GM10248 (cell line): ENCODE measurements at regions of chr2 and their contacts with region 1.

Region 1: DNA sequence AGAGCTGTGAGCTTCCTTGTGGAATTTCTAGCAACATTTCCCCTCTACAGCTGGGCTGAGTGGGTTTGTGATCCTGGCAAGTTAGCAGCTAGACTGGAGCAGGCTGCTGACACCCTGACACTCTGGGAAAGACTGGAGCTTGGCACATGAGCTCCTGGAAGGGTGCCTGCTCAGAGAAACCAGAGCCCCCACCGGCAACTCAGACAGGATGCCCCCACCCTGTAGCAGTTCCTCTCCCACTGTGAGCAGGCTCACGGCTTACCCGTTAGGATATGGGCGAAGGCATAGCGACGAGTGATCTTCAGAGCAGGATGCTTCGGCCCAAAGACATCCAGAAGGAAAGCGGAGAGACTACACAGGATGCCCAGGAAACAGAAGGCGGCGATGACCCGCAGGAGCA is 11.2 kb downstream of the TMEM127 start:
- DNase-seq: no peak
- CTCF ChIP-seq: no peak

Region 2: GRCh38 chr2:96265840-96266679 is 11.5 kb after region 1 on chr2 and contains the starts of genes CIAO1 and TMEM127:
- CTCF ChIA-PET with region 1: interaction called, 18 read pairs
- POLR2A ChIA-PET with region 1: interaction called, 7 read pairs
- DNase-seq: peak; percentile 99
- CTCF ChIP-seq: peak; percentile 14